ENCODE measurements at regions of chr5 and their contacts with region 1.

Region 1: GRCh38 chr5:153629027-153629895 is 138.8 kb downstream of the GRIA1 start:
- DNase-seq: no peak

Region 2: DNA sequence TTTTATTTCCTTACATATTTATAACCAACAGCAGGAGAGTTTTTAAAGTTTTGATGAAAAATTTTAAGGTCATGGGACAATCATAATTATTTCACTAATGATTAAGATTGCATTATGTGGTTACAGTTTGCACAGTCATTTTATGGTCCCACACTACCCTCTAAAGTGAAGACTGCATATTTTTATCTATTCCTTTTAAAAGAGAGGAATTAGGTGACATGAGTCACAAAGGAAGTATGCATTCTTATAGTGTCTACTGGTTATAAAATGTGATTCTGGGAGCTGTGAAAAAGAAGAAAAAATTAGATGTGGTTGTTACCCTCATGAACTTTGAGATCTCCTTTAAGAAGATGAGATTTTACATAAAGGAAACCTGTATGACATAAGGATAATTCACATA is 226.7 kb before region 1 on chr5:
- intact Hi-C with region 1: no loop called
- DNase-seq: no peak

Region 3: GRCh38 chr5:153496835-153497234 is 132.4 kb before region 1 on chr5:
- intact Hi-C with region 1: no loop called
- DNase-seq: no peak

Region 4: GRCh38 chr5:153700940-153701339 is 71.7 kb after region 1 on chr5:
- intact Hi-C with region 1: loop called (anchors 5 kb)
- DNase-seq: no peak

Measured in cardiac septum (tissue), 1 donor.